Activated B cell treated with CpG ODN at 0.5 μM for 24 hours (primary cell): ENCODE measurements at regions of chr19 and their contacts with region 1.

Region 1: GRCh38 chr19:16338470-16339360 is 14.1 kb downstream of the KLF2 start:
- DNase-seq: no peak
- ATAC-seq: peak; percentile 19
- H3K4me3 Mint-ChIP-seq: peak overlapping the region; percentile 76
- H3K27ac Mint-ChIP-seq: peak overlapping the region; percentile 75
- H3K4me1 Mint-ChIP-seq: peaks cover 64% of the 10 kb centered on the region
- H3K27me3 Mint-ChIP-seq: no peaks in the 10 kb centered on the region
- CTCF ChIP-seq: no peak

Region 2: DNA sequence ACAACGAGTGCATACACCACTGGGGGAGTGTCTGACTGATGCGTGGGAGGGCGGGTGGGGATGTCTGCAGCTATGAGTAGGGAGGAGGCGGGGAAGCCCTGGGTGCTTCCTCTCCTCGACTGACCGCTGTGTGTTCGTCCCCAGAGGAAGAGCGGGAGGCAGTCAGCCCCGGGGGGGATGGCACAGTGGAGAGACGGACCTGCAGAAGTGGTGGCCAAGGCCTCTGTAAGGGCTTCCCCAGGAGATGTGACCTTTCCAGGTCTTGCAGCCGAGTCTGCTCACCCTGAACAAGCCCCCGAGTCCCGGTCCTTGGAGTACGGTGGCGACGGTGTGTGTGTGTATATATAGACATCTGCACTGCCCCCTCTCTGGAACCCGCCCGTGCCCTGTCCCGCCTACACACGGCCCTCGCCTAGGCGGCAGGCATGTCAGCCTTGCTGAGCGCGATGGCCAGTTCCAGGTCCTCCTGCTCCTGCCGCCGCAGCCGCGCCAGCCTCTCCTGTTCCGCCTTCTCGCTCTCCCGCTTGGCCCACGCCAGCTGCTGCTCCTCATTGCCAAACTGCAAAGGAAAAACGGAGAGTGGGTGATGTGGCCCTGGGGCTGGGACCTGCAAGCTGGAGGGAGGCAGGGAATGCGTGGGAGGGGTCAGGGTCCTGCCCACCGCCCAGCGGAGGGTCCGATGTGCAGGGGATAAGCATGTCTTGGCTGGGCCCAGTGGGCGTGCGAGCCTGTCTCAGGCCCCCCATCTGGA is 16.8 kb after region 1 on chr19:
- CTCF ChIA-PET with region 1: interaction called, 3 read pairs
- POLR2A ChIA-PET with region 1: interaction called, 828 read pairs
- intact Hi-C with region 1: loop called (anchors 2 kb)
- DNase-seq: no peak
- ATAC-seq: peak; percentile 63
- H3K4me3 Mint-ChIP-seq: peak overlapping the region; percentile 66
- H3K27ac Mint-ChIP-seq: no peak overlapping the region
- H3K4me1 Mint-ChIP-seq: peaks cover 83% of the 10 kb centered on the region
- H3K27me3 Mint-ChIP-seq: no peaks in the 10 kb centered on the region
- CTCF ChIP-seq: no peak

Region 3: DNA sequence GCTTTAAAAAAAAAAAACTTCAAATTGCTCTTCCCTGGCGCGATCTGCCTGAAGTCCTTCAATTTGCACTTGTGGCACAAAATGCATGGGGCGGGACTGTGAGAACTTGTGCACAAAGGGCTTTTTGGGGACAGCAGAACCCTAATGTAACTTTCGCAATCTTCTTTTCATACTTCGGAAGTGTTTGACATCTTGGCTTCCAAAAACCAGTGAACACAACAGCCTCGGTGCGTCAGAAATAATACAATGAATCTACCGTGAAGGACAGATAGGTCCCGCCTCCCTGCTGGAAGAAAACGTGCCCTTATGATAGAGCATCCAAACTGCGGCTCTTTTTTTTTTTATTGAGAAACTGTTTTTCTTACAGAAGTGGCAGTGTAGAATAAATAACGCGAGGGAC is 22.5 kb after region 1 on chr19:
- CTCF ChIA-PET with region 1: interaction called, 10 read pairs
- POLR2A ChIA-PET with region 1: interaction called, 828 read pairs
- intact Hi-C with region 1: loop called (anchors 1 kb)
- DNase-seq: no peak
- ATAC-seq: no peak
- H3K4me3 Mint-ChIP-seq: peak overlapping the region; percentile 28
- H3K27ac Mint-ChIP-seq: no peak overlapping the region
- H3K4me1 Mint-ChIP-seq: peaks cover 78% of the 10 kb centered on the region
- H3K27me3 Mint-ChIP-seq: no peaks in the 10 kb centered on the region
- CTCF ChIP-seq: no peak

Region 4: DNA sequence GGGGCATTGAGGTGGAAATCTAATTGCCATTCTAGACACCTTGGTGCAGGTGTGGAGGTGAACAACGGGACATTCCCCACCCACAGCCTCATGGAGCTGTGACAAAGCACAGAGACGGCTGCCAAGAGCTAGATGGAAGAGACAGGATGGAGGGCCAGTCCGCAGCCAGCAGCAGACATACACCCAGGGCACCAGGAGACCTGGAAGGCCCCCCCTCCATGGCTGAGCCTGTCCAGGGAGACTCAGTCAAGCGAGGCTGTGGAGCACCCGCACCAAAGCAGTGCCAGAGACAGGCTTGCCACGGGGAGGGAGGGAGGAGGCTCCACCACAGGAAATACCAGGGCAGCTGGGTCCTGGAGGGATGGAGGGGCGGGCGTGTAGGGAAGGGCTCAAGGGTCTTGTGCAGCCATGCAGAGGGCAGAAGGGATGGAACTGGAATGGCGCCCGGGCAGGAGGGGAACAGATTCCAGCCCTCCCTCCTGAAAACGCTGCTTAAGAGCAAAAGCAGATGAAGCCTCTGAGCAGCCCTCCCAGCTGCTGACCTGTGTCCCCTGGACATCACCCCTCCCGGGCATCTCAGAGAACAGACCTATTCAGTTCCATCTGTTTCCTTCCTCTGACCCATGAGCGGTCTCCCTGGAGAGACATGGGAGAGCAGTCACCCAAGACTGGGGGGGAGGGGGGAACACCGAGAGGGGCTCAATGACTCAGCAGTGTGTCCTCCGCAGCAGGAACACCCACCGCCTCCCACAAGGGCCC is 118.7 kb after region 1 on chr19:
- CTCF ChIA-PET with region 1: no interaction called
- POLR2A ChIA-PET with region 1: no interaction called
- intact Hi-C with region 1: no loop called
- DNase-seq: no peak
- ATAC-seq: peak; percentile 45
- H3K4me3 Mint-ChIP-seq: peak overlapping the region; percentile 66
- H3K27ac Mint-ChIP-seq: peak overlapping the region; percentile 65
- H3K4me1 Mint-ChIP-seq: peaks cover 64% of the 10 kb centered on the region
- H3K27me3 Mint-ChIP-seq: no peaks in the 10 kb centered on the region
- CTCF ChIP-seq: no peak